Right cardiac atrium (tissue), 5 donors: ENCODE measurements at regions of chr9 and their contacts with region 1.

Region 1: DNA sequence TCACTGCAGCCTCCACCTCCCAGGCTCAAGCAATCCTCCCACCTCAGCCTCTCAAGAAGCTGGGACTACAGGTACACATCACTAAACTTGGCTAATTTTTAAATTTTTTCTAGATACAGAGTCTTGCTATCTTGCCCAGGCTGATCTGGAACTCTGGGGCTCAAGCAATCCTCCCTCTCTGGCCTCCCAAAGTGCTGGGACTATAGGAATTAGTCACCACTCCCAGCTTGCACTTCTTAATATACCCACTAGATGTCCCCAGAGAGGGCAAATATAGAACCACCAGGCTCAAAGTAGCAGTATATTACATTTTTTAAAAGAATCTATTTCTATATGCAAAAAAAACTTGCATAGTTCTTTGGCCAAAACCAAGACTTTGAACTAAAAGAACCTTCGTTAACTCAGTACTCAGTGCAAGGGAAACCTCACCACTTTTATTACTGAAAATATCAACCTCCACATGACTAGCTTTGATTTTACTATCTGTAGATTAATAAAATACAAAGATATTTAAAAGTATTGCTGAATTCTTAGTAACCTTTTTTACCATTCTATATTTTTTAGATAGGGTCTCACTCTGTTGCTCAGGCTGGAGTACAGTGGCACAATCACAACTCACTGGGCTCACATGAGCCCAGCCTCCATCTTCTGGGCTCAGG is 25.8 kb upstream of the HSD17B3 start:
- DNase-seq: no peak
- ATAC-seq: peak; percentile 55 to 76
- H3K4me3 ChIP-seq: no peak overlapping the region
- H3K27ac ChIP-seq: no peak overlapping the region
- H3K4me1 ChIP-seq: no peaks in the 10 kb centered on the region
- H3K27me3 ChIP-seq: no peaks in the 10 kb centered on the region

Region 2: DNA sequence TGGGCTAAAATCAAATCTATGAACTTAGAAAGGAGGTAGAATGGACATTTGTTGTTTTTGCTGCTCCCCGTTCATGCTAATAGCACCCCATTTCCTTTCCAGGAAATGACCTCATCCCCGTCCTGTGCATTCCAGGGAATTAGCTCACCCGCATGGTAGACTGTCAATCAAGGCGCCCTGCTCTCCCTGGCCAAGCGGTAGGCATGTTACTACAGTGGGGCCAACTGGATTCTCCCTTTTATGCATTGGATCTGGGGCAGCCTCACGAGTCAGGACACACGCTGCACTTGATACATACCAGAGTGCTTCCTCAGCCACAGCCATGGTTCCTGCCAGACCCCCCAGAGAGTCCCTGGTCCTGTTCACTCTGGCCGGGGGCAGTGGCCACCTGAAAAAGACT is 700.0 kb before region 1 on chr9:
- intact Hi-C with region 1: no loop called
- DNase-seq: no peak
- ATAC-seq: peak in 1 of 2 donors; percentile 69
- H3K4me3 ChIP-seq: no peak overlapping the region
- H3K27ac ChIP-seq: no peak overlapping the region
- H3K4me1 ChIP-seq: no peaks in the 10 kb centered on the region
- H3K27me3 ChIP-seq: no peaks in the 10 kb centered on the region

Region 3: DNA sequence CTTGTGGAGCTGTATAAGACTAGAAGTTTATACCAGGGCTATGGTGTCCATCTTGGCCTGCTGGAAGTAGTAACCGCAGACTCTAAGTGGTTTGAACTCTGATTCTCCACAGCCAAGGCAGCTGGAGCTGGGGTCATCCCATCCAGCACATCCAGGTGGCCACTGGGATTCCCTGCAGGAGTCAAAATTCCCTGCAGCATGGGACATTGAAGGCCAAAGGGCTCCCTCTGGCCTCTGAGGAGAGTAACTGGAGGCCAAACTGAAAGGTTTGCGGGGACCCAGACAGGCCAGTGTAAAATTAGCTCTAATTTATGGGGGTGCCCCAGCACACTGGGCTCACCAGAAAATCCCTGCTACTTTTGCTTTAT is 339.5 kb after region 1 on chr9:
- intact Hi-C with region 1: loop called (anchors 5 to 10 kb)
- DNase-seq: no peak
- ATAC-seq: no peak
- H3K4me3 ChIP-seq: no peak overlapping the region
- H3K27ac ChIP-seq: no peak overlapping the region
- H3K4me1 ChIP-seq: no peaks in the 10 kb centered on the region
- H3K27me3 ChIP-seq: no peaks in the 10 kb centered on the region